Endothelial cell of umbilical vein (primary cell): ENCODE measurements at regions of chr12 and their contacts with region 1.

Region 1: DNA sequence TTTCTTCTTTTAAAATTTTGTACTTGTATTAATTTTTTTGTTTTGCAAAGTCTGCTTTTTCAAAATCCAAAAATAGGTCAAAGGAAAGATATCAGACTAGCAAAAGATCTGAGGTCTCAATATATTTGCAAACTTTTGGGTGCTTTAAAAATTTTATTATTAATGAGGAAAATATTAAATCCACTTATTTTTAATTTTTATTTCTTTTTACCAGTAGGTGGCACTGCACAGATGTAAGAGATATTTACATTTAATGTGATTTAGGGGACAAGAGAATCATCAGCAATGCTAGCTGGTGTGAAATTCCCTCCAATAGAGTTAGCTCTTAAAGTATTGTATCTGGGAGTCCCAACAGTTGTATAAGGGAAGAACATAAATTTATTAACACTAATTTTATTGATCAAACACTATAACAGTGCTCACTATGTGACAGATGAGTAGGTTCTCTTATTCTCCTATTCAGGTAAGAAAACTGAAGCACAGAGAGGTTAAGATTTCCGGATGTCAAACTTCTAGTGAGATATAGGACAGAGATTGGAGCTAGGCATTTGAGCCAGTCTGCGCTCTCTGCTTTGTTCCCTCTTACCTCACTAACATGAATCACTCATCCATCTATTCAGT is 30.5 kb downstream of the ALX1 start:
- DNase-seq: peak; percentile 43
- H3K4me3 ChIP-seq: no peak overlapping the region
- H3K27ac ChIP-seq: no peak overlapping the region
- H3K4me1 ChIP-seq: no peaks in the 10 kb centered on the region
- H3K27me3 ChIP-seq: no peaks in the 10 kb centered on the region
- CTCF ChIP-seq: peak in 1 of 2 donors; percentile 11
- POLR2A ChIP-seq: no peak

Region 2: GRCh38 chr12:84702001-84702400 is 608.6 kb before region 1 on chr12:
- CTCF ChIA-PET with region 1: no interaction called
- POLR2A ChIA-PET with region 1: no interaction called
- dilution Hi-C with region 1: no loop called
- intact Hi-C with region 1: no loop called
- DNase-seq: peak; percentile 1
- H3K4me3 ChIP-seq: no peak overlapping the region
- H3K27ac ChIP-seq: no peak overlapping the region
- H3K4me1 ChIP-seq: no peaks in the 10 kb centered on the region
- H3K27me3 ChIP-seq: no peaks in the 10 kb centered on the region
- CTCF ChIP-seq: no peak
- POLR2A ChIP-seq: no peak

Region 3: GRCh38 chr12:85155787-85156186 is 154.8 kb before region 1 on chr12:
- CTCF ChIA-PET with region 1: interaction called, 19 read pairs
- POLR2A ChIA-PET with region 1: no interaction called
- dilution Hi-C with region 1: no loop called
- intact Hi-C with region 1: loop called (anchors 2 kb)
- DNase-seq: peak; percentile 67
- H3K4me3 ChIP-seq: no peak overlapping the region
- H3K27ac ChIP-seq: no peak overlapping the region
- H3K4me1 ChIP-seq: no peaks in the 10 kb centered on the region
- H3K27me3 ChIP-seq: no peaks in the 10 kb centered on the region
- CTCF ChIP-seq: peak in 1 of 2 donors; percentile 31
- POLR2A ChIP-seq: no peak

Region 4: DNA sequence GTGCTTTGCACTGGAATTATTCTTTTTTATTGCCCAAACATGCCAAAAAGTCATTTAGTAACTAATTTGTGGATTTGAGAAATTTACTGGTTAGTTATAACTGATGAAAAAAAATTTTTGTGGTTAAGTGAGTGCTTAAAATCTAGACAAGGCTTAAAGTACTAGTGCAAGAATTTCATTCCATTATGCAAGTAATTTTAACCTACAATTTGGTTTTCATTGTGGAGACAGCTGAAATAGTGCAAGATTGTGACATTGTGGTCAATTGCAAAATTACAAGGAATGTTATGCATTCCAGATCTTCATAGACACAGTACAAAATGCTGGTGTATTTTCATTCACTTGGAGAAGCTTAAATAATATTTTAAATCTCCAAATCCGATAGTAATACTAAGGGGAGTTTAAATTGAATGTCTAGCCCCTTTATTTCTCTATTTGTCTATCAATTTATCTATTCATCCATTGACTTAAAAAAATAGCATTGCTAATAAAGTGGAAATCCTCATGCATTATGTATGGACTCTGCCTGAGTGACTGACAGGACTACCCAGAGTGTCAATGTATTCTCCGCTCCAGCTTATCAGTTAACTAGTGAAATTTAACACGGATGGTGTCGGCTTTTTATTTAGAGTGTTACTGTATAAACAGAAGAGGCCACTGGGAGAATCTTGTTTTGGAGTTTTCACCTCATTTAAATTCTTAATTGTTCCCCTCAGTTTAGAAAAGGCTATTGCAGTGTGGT is 95.4 kb after region 1 on chr12:
- CTCF ChIA-PET with region 1: interaction called, 11 read pairs
- POLR2A ChIA-PET with region 1: no interaction called
- dilution Hi-C with region 1: no loop called
- intact Hi-C with region 1: no loop called
- DNase-seq: no peak
- H3K4me3 ChIP-seq: no peak overlapping the region
- H3K27ac ChIP-seq: no peak overlapping the region
- H3K4me1 ChIP-seq: no peaks in the 10 kb centered on the region
- H3K27me3 ChIP-seq: no peaks in the 10 kb centered on the region
- CTCF ChIP-seq: no peak
- POLR2A ChIP-seq: no peak

Region 5: DNA sequence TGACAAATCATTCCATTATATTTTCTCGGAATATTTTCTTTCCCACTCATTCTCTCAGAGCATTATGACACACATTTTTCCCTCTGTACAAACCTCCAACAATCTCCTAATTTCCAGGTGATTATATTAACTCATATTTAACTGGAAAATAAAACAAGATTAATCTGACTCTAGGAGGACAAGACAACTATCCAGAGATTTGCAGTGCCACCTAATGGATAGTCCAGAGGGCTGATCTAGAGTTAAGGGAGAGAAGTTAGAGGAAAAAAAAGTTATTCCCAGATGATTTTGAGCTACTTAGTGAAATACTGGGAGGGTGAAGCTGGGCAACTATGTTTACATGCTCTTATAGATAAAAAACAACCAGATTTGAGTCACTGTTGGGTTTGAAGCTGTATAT is 131.2 kb after region 1 on chr12:
- CTCF ChIA-PET with region 1: interaction called, 34 read pairs
- POLR2A ChIA-PET with region 1: no interaction called
- dilution Hi-C with region 1: no loop called
- intact Hi-C with region 1: loop called (anchors 2 kb)
- DNase-seq: peak; percentile 52
- H3K4me3 ChIP-seq: no peak overlapping the region
- H3K27ac ChIP-seq: no peak overlapping the region
- H3K4me1 ChIP-seq: no peaks in the 10 kb centered on the region
- H3K27me3 ChIP-seq: no peaks in the 10 kb centered on the region
- CTCF ChIP-seq: peak in 1 of 2 donors; percentile 43
- POLR2A ChIP-seq: no peak